Left lung (tissue), 14 donors: ENCODE measurements at regions of chr4 and their contacts with region 1.

Region 1: GRCh38 chr4:110631584-110632505 is 9.0 kb upstream of the PITX2 start:
- DNase-seq: peak in 3 of 4 donors; percentile 71 to 92 (median 87)
- ATAC-seq: peak; percentile 99
- H3K4me3 ChIP-seq: peak overlapping the region in 1 of 2 donors; percentile 15
- H3K27ac ChIP-seq: no peak overlapping the region
- H3K4me1 ChIP-seq: peaks cover 9 to 19% of the 10 kb centered on the region in 2 donors
- H3K27me3 ChIP-seq: peaks cover 100% of the 10 kb centered on the region in 2 donors
- CTCF ChIP-seq: peak; percentile 48 to 57

Region 2: DNA sequence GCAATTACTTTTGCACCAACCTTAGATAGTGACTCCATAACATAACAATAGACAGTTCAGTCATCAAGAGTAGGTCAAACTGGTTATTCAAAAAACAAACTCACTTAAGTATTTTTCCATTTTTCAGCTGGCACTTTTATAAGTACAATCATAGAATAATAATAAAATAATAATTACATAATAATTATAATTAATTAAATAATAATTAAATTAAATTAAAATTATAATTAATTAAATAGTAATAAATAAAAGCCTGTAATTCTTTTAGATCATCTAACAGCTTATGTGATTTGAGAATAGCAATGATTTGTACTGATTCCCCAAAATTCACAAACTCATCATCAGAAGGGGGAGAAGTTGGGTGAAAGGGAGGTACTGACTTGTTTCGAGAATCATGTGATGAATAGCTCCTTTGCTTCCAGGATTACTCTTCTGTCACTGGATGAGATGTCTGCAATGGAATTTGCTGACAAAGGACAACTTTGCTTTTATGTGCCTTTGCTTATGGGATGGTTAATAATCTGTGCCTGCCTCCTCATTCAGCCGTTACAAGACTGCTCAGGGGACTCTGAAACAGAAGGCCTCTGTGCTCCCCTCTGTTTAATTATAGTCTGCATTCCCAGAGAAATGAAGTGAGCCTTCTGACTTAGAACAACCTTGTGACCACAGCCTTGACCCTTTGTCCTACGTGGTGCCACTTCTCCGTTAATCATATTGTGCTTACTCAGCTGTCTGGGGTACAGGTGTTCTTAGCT is 260.7 kb before region 1 on chr4:
- intact Hi-C with region 1: no loop called
- DNase-seq: no peak
- ATAC-seq: no peak
- H3K4me3 ChIP-seq: no peak overlapping the region
- H3K27ac ChIP-seq: no peak overlapping the region
- H3K4me1 ChIP-seq: no peaks in the 10 kb centered on the region
- H3K27me3 ChIP-seq: no peaks in the 10 kb centered on the region
- CTCF ChIP-seq: no peak

Region 3: DNA sequence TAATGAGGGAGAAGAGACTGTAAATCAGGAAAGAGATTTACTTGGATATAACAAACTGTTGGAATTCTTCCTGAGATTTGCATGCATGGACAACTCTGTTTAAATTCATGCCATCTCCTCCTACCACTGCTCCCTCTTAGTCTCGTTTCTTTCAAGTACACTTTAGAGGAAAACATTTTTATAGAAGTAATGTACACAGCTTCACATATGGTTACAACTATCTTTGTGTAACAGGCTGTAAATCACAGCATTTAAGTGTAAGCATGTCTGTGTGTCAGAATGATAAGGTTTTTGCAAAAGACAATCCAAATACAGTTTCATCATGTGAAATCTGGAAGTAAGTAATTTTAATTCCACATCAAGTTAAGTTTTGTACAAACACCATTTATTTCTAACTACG is 177.4 kb before region 1 on chr4:
- intact Hi-C with region 1: no loop called
- DNase-seq: no peak
- ATAC-seq: no peak
- H3K4me3 ChIP-seq: no peak overlapping the region
- H3K27ac ChIP-seq: no peak overlapping the region
- H3K4me1 ChIP-seq: no peaks in the 10 kb centered on the region
- H3K27me3 ChIP-seq: no peaks in the 10 kb centered on the region
- CTCF ChIP-seq: no peak

Region 4: DNA sequence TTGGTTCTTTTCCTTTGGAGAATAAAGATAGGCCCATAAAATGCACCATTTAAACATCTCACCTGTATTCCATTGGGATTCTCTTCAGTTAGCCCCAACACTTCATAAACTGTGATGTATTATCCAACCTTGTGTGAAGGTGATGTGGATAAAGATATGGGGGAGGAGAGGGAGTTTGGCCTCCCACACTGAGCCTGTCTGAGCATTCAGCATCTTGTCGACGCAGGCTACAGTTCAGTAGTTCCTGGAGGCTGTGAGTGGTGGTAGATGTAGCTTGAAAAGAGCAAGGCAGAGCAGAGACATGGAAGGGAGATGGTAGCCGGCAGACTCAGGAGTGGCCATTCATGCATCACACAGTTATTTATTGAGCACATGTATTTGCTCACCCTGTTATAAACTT is 283.5 kb after region 1 on chr4:
- intact Hi-C with region 1: no loop called
- DNase-seq: no peak
- ATAC-seq: no peak
- H3K4me3 ChIP-seq: no peak overlapping the region
- H3K27ac ChIP-seq: no peak overlapping the region
- H3K4me1 ChIP-seq: no peaks in the 10 kb centered on the region
- H3K27me3 ChIP-seq: no peaks in the 10 kb centered on the region
- CTCF ChIP-seq: no peak

Region 5: DNA sequence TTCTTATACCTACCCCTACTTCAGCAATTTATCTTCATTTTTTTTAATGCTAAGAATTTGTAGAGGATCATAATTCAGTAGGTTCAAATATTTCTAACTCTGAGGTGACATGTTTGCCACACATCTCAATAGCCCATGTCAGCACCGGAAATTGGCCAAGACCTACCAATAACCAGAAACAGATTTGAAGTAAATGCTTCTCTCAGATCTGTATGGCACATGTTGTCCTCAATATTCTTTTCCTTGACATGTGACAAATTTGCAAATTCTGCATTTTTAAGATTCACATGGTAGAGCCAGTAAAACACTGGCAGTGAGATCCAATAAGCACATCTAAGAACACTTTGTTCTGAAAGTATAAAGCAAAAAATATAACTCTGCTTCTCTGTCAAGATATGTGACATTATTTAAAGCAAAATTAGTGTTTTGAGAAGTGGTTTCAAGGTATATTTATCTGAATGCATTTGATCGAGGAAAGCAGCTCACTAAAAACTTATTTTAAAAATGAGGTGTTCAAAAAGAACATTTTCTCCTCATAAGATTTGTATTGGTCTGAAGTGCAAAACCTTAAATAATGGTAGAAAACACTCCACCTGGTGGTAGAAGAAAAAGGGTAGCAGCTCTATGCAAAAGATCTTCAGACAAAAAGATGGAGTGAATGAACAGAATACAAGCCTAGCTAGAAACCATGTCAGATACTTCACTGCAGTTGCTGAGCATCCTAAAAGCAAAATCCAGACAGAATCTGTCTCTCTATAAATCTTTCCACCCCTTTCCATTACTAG is 999.6 kb after region 1 on chr4:
- intact Hi-C with region 1: loop called in 1 of 2 experiments (anchors 5 kb)
- DNase-seq: peak in 1 of 4 donors; percentile 13
- ATAC-seq: no peak
- H3K4me3 ChIP-seq: no peak overlapping the region
- H3K27ac ChIP-seq: no peak overlapping the region
- H3K4me1 ChIP-seq: no peaks in the 10 kb centered on the region
- H3K27me3 ChIP-seq: peaks cover 0 to 9% of the 10 kb centered on the region in 2 donors
- CTCF ChIP-seq: peak in 1 of 2 donors; percentile 16